Mammary epithelial cell (primary cell): ENCODE measurements at regions of chr7 and their contacts with region 1.

Region 1: GRCh38 chr7:142134909-142135308 is 23.4 kb downstream of the MGAM2 start:
- DNase-seq: no peak
- H3K4me3 ChIP-seq: no peak overlapping the region
- H3K27ac ChIP-seq: no peak overlapping the region
- H3K4me1 ChIP-seq: no peaks in the 10 kb centered on the region
- H3K27me3 ChIP-seq: no peaks in the 10 kb centered on the region
- CTCF ChIP-seq: no peak

Region 2: DNA sequence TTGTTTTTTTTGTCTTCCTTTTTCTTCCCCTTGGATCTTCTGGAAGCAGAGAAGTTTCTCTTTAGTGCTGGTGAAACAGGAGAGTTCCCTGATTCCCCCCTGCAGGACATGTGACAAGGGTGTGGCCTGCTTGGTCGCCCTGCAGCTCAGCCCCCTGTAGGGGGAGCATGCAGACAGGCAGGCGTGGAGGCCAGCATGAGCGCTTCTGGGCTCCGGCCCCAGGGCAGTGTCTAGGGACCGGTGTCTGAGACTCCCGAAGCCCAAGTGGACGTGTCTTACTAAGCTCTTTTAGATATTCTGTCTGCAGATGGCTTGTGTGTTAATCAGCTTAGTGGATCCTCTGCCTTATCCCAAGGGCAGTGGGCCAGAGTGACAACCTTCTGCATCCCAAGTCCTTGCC is 96.8 kb after region 1 on chr7:
- CTCF ChIA-PET with region 1: no interaction called
- dilution Hi-C with region 1: loop called (anchors 5 kb)
- in situ Hi-C with region 1: no loop called
- intact Hi-C with region 1: no loop called
- DNase-seq: no peak
- H3K4me3 ChIP-seq: no peak overlapping the region
- H3K27ac ChIP-seq: no peak overlapping the region
- H3K4me1 ChIP-seq: no peaks in the 10 kb centered on the region
- H3K27me3 ChIP-seq: no peaks in the 10 kb centered on the region
- CTCF ChIP-seq: no peak

Region 3: DNA sequence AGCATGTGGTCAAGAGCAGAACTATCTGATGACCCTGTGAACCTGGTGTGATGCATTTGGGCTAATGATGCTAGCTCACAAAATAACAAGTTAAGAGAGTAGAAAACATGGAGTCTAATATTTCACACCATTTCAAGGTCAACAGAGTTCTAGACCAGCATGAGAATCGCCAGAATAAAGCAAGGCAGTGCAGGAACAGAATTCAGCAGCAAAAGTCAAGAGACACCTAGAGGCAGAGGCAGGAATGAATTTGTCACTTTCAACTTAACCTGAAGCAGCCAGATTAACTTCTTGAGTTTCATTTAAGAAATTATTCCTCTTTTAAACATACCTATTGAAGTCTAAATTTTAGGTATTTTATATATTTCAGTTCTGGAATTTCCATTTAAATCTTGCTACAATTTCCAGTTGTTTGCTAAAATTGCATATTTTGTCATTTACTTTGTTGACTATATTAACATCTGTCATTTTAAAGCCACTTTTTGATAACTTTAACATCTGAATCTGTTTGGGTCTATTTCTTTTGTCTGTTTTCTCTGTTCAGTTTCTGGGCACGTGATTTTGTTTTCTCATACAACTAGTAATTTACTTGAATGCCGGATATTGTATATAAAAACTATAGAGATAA is 167.1 kb after region 1 on chr7:
- CTCF ChIA-PET with region 1: no interaction called
- dilution Hi-C with region 1: no loop called
- in situ Hi-C with region 1: no loop called
- intact Hi-C with region 1: no loop called
- DNase-seq: no peak
- H3K4me3 ChIP-seq: no peak overlapping the region
- H3K27ac ChIP-seq: no peak overlapping the region
- H3K4me1 ChIP-seq: no peaks in the 10 kb centered on the region
- H3K27me3 ChIP-seq: peaks cover 3% of the 10 kb centered on the region
- CTCF ChIP-seq: peak; percentile 57 to 71